Vagina (tissue), 2 donors: ENCODE measurements at regions of chr5 and their contacts with region 1.

Region 1: GRCh38 chr5:131289738-131290137 is 25.9 kb downstream of the CDC42SE2 start:
- DNase-seq: no peak
- H3K4me3 ChIP-seq: no peak overlapping the region
- H3K27ac ChIP-seq: no peak overlapping the region
- H3K4me1 ChIP-seq: no peaks in the 10 kb centered on the region
- H3K27me3 ChIP-seq: no peaks in the 10 kb centered on the region
- CTCF ChIP-seq: no peak
- POLR2A ChIP-seq: no peak

Region 2: DNA sequence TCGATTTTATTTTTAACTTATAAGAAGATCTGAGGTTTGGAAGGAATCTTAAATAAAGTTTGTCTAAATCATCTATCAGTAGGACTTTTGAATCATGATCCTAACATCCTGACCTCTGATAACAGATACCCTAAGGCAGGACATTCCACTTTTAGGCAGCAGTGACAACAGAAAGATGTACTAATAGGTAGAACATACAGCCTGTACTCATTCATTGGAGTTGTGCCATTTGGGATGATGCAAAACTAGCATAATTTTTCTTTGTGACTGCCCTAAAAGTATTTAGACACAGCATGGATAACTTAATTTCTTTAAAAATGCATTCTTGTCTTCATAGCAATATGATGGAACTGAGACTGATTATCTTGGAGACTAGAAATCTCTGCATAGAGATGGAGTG is 13.8 kb after region 1 on chr5:
- intact Hi-C with region 1: no loop called
- DNase-seq: no peak
- H3K4me3 ChIP-seq: no peak overlapping the region
- H3K27ac ChIP-seq: no peak overlapping the region
- H3K4me1 ChIP-seq: peaks cover 5% of the 10 kb centered on the region
- H3K27me3 ChIP-seq: no peaks in the 10 kb centered on the region
- CTCF ChIP-seq: no peak
- POLR2A ChIP-seq: no peak

Region 3: GRCh38 chr5:131952301-131952857 is 662.6 kb after region 1 on chr5:
- intact Hi-C with region 1: loop called (anchors 5 kb)
- DNase-seq: no peak
- H3K4me3 ChIP-seq: no peak overlapping the region
- H3K27ac ChIP-seq: no peak overlapping the region
- H3K4me1 ChIP-seq: no peaks in the 10 kb centered on the region
- H3K27me3 ChIP-seq: no peaks in the 10 kb centered on the region
- CTCF ChIP-seq: no peak
- POLR2A ChIP-seq: no peak